ENCODE measurements at regions of chr4 and their contacts with region 1.

Region 1: GRCh38 chr4:22688236-22688635 is 4.5 kb upstream of the GBA3 start:
- DNase-seq: no peak
- ATAC-seq: no peak
- H3K4me3 ChIP-seq: no peak overlapping the region
- H3K27ac ChIP-seq: no peak overlapping the region
- H3K4me1 ChIP-seq: no peaks in the 10 kb centered on the region
- H3K27me3 ChIP-seq: no peaks in the 10 kb centered on the region
- CTCF ChIP-seq: no peak
- POLR2A ChIP-seq: no peak

Region 2: DNA sequence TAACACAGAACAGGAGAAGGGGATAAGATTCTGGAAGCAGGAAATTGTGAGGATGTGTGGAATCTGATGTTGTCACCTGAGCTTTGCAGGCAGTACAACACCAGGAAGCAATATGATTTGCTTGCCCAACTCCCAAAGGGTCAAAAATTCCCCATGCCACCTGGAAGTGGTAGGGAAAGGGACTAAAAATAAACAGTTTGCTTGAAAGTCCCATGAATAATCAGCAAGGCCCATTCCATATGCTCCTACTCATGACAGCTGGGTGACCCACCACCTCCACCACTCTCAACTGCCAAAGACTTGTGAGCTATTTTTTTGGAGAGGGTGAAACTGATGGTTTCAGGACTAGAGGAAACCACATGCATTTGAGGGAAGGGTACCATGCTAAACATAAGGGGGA is 908.1 kb before region 1 on chr4:
- intact Hi-C with region 1: loop called (anchors 10 kb)
- DNase-seq: no peak
- ATAC-seq: peak; percentile 27
- H3K4me3 ChIP-seq: no peak overlapping the region
- H3K27ac ChIP-seq: peak overlapping the region in 1 of 4 donors; percentile 8
- H3K4me1 ChIP-seq: no peaks in the 10 kb centered on the region
- H3K27me3 ChIP-seq: no peaks in the 10 kb centered on the region
- CTCF ChIP-seq: no peak
- POLR2A ChIP-seq: no peak

Region 3: GRCh38 chr4:22407361-22407760 is 280.9 kb before region 1 on chr4:
- intact Hi-C with region 1: loop called (anchors 5 kb)
- DNase-seq: no peak
- ATAC-seq: no peak
- H3K4me3 ChIP-seq: no peak overlapping the region
- H3K27ac ChIP-seq: no peak overlapping the region
- H3K4me1 ChIP-seq: no peaks in the 10 kb centered on the region
- H3K27me3 ChIP-seq: no peaks in the 10 kb centered on the region
- CTCF ChIP-seq: no peak
- POLR2A ChIP-seq: no peak

Region 4: DNA sequence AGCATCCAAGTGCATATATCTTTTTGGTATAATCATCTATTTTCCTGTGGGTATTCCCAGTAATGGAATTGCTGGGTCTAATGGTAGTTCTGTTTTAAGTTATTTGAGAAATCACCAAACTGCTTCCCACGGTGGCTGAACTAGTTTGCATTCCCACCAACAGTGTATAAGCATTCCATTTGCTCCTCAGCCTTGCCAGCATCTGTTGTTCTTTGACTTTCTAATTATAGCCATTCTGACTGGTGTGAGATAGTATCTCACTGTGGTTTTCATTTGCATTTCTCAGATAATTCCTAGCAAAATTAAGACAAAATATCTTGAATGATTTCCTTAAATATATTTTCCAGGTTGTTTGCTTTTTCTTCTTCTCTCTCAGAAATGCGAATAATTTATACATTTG is 345.6 kb after region 1 on chr4:
- intact Hi-C with region 1: no loop called
- DNase-seq: no peak
- ATAC-seq: no peak
- H3K4me3 ChIP-seq: no peak overlapping the region
- H3K27ac ChIP-seq: no peak overlapping the region
- H3K4me1 ChIP-seq: no peaks in the 10 kb centered on the region
- H3K27me3 ChIP-seq: no peaks in the 10 kb centered on the region
- CTCF ChIP-seq: no peak
- POLR2A ChIP-seq: no peak